Activated CD8-positive, alpha-beta T cell treated with anti-CD3 and anti-CD28 coated beads, Interleukin-2, amount 10 ng/mL, durations not matched to agents 7 days and 5 days (primary cell): ENCODE measurements at regions of chr15 and their contacts with region 1.

Region 1: GRCh38 chr15:101258238-101259144 is 6.6 kb upstream of the CHSY1 start:
- DNase-seq: peak; percentile 69
- ATAC-seq: no peak
- H3K4me3 Mint-ChIP-seq: no peak overlapping the region
- H3K27ac Mint-ChIP-seq: no peak overlapping the region
- H3K4me1 Mint-ChIP-seq: peaks cover 32% of the 10 kb centered on the region
- H3K27me3 Mint-ChIP-seq: peaks cover 11% of the 10 kb centered on the region

Region 2: GRCh38 chr15:100918034-100918689 is 340.3 kb before region 1 on chr15:
- CTCF ChIA-PET with region 1: interaction called, 10 read pairs
- POLR2A ChIA-PET with region 1: no interaction called
- DNase-seq: peak; percentile 76
- ATAC-seq: peak; percentile 95
- H3K4me3 Mint-ChIP-seq: peak overlapping the region; percentile 70
- H3K27ac Mint-ChIP-seq: no peak overlapping the region
- H3K4me1 Mint-ChIP-seq: peaks cover 22% of the 10 kb centered on the region
- H3K27me3 Mint-ChIP-seq: peaks cover 66% of the 10 kb centered on the region

Region 3: DNA sequence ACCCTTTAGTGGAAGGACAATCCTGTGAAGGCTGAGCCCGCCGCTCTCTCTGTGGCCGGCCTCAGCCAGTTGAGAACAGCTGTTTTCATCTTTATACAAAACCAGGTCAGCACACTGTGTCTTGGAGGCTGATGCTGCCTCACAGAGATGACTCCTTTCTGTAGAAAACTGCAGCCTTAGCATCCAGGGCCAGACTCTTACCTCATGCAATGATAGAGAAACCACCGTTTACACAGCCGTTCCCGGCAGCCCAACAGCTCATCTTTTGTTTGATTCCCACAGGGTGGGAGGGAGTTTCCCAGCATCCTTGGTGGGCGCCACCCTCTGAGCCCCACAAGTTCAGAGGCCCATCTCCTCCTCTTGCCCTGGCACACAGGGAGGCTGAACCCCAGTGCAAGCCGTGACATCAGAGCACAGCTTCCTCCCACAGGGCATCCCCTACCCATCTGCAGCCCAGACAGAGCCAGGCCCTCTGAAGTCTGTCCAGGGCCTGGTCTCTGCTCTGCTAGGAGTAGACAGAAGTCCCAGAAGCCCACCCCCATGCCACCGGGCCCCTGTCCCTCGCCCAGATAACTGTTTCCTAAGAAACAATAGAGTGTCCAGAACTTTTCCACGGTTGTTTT is 234.3 kb before region 1 on chr15:
- CTCF ChIA-PET with region 1: interaction called, 27 read pairs
- POLR2A ChIA-PET with region 1: no interaction called
- DNase-seq: peak; percentile 10
- ATAC-seq: no peak
- H3K4me3 Mint-ChIP-seq: no peak overlapping the region
- H3K27ac Mint-ChIP-seq: no peak overlapping the region
- H3K4me1 Mint-ChIP-seq: no peaks in the 10 kb centered on the region
- H3K27me3 Mint-ChIP-seq: no peaks in the 10 kb centered on the region

Region 4: GRCh38 chr15:101088788-101089583 is 169.5 kb before region 1 on chr15:
- CTCF ChIA-PET with region 1: interaction called, 96 read pairs
- POLR2A ChIA-PET with region 1: interaction called, 3 read pairs
- DNase-seq: peak; percentile 80
- ATAC-seq: peak; percentile 86
- H3K4me3 Mint-ChIP-seq: no peak overlapping the region
- H3K27ac Mint-ChIP-seq: no peak overlapping the region
- H3K4me1 Mint-ChIP-seq: peaks cover 36% of the 10 kb centered on the region
- H3K27me3 Mint-ChIP-seq: peaks cover under 1% of the 10 kb centered on the region

Region 5: DNA sequence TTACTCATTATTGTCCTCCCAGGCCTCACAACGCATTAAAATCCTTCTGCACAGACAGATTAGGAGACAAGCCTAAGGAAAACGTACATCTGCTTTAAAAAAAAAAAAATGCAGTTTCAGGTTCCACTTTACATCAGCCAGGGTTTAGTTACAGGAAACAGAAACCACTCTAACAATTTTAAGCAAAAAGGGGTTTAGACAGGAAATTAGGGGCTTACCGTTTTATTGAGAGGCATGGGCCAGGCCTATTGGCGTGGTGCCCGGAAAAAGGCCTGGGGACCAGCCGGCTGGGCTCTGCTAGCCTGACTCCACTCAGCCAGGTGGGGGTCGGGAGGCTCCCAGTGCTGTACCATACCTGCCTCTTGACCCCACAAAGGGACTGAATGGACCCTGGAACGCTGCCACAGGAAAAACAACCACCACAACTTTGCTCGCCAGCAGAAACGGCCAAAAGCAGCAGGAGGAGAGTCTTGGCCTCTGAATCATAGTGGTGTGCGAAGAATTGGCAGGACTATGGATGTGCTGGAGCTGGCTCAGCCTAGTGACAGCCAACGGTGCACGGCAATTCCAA is 130.9 kb before region 1 on chr15:
- CTCF ChIA-PET with region 1: interaction called, 15 read pairs
- POLR2A ChIA-PET with region 1: no interaction called
- DNase-seq: peak; percentile 61
- ATAC-seq: peak; percentile 73
- H3K4me3 Mint-ChIP-seq: peak overlapping the region; percentile 69
- H3K27ac Mint-ChIP-seq: peak overlapping the region; percentile 98
- H3K4me1 Mint-ChIP-seq: peaks cover 74% of the 10 kb centered on the region
- H3K27me3 Mint-ChIP-seq: no peaks in the 10 kb centered on the region

Region 6: DNA sequence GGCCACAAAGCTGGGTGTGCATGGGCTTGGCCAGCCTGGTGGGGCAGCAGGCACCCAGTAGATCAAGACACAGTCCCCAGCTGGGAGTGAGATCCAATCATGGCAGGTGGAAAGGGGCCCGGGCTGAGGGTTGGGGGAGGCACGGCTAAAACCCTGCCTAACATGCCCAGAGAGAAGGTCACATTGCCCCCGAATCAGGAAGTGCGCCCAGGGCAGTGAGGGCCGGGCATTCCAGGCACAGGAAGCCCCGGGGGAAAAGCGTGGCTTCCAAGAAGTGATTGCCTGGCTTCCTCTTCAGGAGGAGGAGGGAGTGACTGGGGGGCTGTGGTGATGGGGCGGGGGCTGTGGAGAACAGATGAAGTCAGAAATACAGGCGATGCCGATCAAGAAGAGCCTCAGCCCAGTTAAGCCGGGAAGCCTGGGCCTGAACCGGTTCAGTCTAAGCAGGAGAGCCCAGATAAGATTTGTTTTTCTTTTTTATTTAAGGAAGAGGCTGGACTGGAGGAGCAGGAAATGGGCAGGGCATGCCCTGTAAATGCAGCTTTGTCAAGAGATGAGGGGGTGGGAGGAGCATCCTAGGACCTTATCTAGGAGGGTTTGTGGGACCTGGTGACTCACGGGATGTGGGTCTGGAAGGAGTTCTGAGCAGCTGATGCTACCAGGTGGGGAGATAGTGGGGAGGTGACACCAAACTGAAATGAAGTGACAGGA is 90.6 kb before region 1 on chr15:
- CTCF ChIA-PET with region 1: interaction called, 10 read pairs
- POLR2A ChIA-PET with region 1: no interaction called
- DNase-seq: peak; percentile 92
- ATAC-seq: peak; percentile 96
- H3K4me3 Mint-ChIP-seq: peak overlapping the region; percentile 69
- H3K27ac Mint-ChIP-seq: peak overlapping the region; percentile 95
- H3K4me1 Mint-ChIP-seq: peaks cover 48% of the 10 kb centered on the region
- H3K27me3 Mint-ChIP-seq: no peaks in the 10 kb centered on the region

Region 7: GRCh38 chr15:101277038-101277882 is 18.8 kb after region 1 on chr15 and contains the start of gene SELENOS:
- CTCF ChIA-PET with region 1: interaction called, 12 read pairs
- POLR2A ChIA-PET with region 1: no interaction called
- DNase-seq: peak; percentile 90
- ATAC-seq: peak; percentile 96
- H3K4me3 Mint-ChIP-seq: peak within 1 kb of the TSS; percentile 96
- H3K27ac Mint-ChIP-seq: peak within 1 kb of the TSS; percentile 93
- H3K4me1 Mint-ChIP-seq: peaks cover 25% of the 10 kb centered on the region
- H3K27me3 Mint-ChIP-seq: no peaks in the 10 kb centered on the region
- total RNA-seq, gene SELENOS: 29.8 to 32.2 TPM